ENCODE measurements at regions of chr19 and their contacts with region 1.

Region 1: GRCh38 chr19:12847159-12848139 is 9.1 kb downstream of the MAST1 start:
- DNase-seq: peak; percentile 72
- H3K4me3 ChIP-seq: no peak overlapping the region
- H3K27ac ChIP-seq: no peak overlapping the region
- H3K4me1 ChIP-seq: peaks cover 2% of the 10 kb centered on the region
- H3K27me3 ChIP-seq: no peaks in the 10 kb centered on the region
- CTCF ChIP-seq: peak; percentile 95 to 100
- POLR2A ChIP-seq: no peak

Region 2: GRCh38 chr19:11346092-11346940 is 1501.1 kb before region 1 on chr19 and contains the starts of genes CCDC159 and TMEM205:
- CTCF ChIA-PET with region 1: no interaction called
- POLR2A ChIA-PET with region 1: interaction called, 10 read pairs
- dilution Hi-C with region 1: no loop called
- intact Hi-C with region 1: no loop called
- DNase-seq: peak; percentile 99
- H3K4me3 ChIP-seq: peak within 1 kb of the TSS; percentile 36 to 93 (median 72)
- H3K27ac ChIP-seq: peak within 1 kb of the TSS; percentile 48
- H3K4me1 ChIP-seq: peaks cover 21% of the 10 kb centered on the region
- H3K27me3 ChIP-seq: no peaks in the 10 kb centered on the region
- CTCF ChIP-seq: no peak
- POLR2A ChIP-seq: peak; percentile 79
- total RNA-seq, gene CCDC159: 30.3 and 31.6 TPM in 2 replicates
- total RNA-seq, gene TMEM205: 57.3 and 58.9 TPM in 2 replicates

Region 3: DNA sequence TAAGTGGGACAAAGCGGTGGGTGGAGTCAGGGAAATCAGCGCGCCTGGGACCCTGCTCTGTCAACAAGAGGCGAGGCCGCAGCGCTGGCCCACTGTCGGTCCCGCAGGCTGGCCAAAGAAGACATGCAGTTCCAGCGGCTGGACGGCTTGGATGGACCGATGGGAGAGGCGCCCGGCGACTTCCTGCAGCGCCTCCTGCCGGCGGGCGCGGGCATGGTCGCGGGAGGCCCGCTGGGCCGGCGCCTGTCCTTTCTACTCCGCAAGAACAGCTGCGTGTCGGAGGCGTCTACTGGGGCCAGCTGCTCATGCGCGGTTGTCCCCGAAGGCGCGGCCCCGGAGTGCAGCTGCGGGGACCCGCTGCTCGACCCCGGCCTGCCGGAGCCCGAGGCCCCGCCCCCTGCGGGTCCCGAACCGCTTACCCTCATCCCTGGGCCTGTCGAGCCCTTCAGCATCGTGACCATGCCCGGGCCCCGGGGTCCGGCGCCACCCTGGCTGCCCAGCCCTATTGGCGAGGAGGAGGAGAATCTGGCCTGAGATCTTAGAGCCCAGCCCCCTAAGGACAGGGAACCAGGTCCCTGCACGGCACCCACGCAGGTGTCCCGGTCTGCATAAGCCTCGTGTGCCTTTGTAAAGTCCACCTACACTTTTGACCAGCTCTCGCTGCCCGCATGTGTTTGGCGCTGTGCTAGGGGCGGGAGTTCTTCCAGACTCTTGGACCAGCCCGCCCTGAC is 89.7 kb before region 1 on chr19:
- CTCF ChIA-PET with region 1: interaction called, 481 read pairs
- POLR2A ChIA-PET with region 1: no interaction called
- dilution Hi-C with region 1: no loop called
- intact Hi-C with region 1: loop called (anchors 1 kb)
- DNase-seq: peak; percentile 81
- H3K4me3 ChIP-seq: peak overlapping the region in 2 of 3 experiments; percentile 22 to 39
- H3K27ac ChIP-seq: no peak overlapping the region
- H3K4me1 ChIP-seq: no peaks in the 10 kb centered on the region
- H3K27me3 ChIP-seq: no peaks in the 10 kb centered on the region
- CTCF ChIP-seq: peak; percentile 98 to 99
- POLR2A ChIP-seq: no peak

Region 4: GRCh38 chr19:12777217-12778016 is 70.0 kb before region 1 on chr19:
- CTCF ChIA-PET with region 1: interaction called, 28 read pairs
- POLR2A ChIA-PET with region 1: no interaction called
- dilution Hi-C with region 1: no loop called
- intact Hi-C with region 1: no loop called
- DNase-seq: peak; percentile 78
- H3K4me3 ChIP-seq: peak overlapping the region; percentile 14 to 57 (median 51)
- H3K27ac ChIP-seq: peak overlapping the region; percentile 82
- H3K4me1 ChIP-seq: peaks cover 23% of the 10 kb centered on the region
- H3K27me3 ChIP-seq: no peaks in the 10 kb centered on the region
- CTCF ChIP-seq: peak; percentile 96 to 97
- POLR2A ChIP-seq: no peak

Region 5: DNA sequence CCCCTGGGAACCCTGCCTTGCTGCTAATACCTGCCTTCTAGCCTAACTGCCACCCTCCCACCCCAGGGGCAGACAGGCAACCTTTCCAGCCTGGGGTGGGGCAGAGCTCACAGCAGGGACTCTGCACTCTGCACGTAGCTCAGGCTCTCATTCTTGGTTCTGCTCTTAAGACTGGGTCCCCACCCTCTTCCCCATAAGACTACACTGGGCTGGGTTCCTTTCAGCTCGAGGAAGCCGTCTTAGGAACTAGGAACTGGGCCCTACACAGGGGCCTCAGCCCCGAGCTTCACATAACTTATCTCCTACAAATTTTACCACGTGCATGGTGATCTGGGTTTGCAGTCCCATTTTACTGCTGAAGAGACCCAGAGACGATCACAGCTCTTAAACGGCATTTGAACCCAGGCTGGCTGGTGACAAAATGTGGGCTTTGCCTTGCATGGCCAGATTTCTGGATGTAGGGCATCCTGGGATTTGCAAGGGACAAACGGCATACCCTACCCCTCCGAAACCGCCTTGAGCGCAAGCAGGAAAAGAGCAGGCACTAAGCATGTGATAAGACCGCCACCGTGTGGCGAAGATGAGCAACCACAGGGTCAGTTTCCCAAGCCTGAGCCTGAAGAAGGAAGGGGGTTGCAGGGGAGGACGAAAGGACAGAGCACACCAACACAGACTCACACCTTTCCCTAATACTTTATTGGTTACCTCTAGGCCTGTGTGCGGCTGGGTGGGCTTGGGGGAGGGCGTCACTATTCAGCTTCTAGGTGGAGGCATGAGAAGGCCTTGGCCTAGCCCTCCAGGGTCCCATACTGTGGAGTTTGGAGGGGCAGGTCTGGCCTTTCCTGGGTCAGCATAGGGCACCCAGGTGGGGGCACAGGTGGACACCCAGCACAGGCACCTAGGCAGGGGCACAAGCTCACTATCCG is 51.0 kb before region 1 on chr19:
- CTCF ChIA-PET with region 1: interaction called, 30 read pairs
- POLR2A ChIA-PET with region 1: no interaction called
- dilution Hi-C with region 1: no loop called
- intact Hi-C with region 1: loop called (anchors 1 kb)
- DNase-seq: peak; percentile 80
- H3K4me3 ChIP-seq: no peak overlapping the region
- H3K27ac ChIP-seq: no peak overlapping the region
- H3K4me1 ChIP-seq: peaks cover 18% of the 10 kb centered on the region
- H3K27me3 ChIP-seq: no peaks in the 10 kb centered on the region
- CTCF ChIP-seq: peak; percentile 89 to 90
- POLR2A ChIP-seq: no peak

Region 6: DNA sequence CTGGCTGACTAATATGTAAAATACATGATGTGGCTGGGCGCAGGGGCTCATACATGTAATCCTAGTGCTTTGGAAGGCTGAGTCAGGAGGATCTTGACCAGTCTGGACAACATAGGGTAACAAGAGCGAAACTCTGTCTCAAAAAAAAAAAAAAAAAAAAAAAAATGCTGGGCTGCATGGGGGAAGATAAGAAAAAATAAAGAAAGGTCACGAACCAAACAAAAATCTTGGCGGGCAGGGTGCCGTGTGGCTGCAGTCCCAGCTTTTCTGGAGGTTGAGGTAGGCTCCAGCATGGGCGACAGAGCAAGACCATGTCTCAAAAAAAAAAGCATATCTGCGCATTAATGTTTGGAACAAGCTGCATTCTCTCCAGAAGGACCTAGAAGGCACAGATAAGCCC is 32.4 kb before region 1 on chr19:
- CTCF ChIA-PET with region 1: interaction called, 30 read pairs
- POLR2A ChIA-PET with region 1: no interaction called
- dilution Hi-C with region 1: no loop called
- intact Hi-C with region 1: no loop called
- DNase-seq: no peak
- H3K4me3 ChIP-seq: no peak overlapping the region
- H3K27ac ChIP-seq: no peak overlapping the region
- H3K4me1 ChIP-seq: no peaks in the 10 kb centered on the region
- H3K27me3 ChIP-seq: no peaks in the 10 kb centered on the region
- CTCF ChIP-seq: no peak
- POLR2A ChIP-seq: no peak

Region 7: DNA sequence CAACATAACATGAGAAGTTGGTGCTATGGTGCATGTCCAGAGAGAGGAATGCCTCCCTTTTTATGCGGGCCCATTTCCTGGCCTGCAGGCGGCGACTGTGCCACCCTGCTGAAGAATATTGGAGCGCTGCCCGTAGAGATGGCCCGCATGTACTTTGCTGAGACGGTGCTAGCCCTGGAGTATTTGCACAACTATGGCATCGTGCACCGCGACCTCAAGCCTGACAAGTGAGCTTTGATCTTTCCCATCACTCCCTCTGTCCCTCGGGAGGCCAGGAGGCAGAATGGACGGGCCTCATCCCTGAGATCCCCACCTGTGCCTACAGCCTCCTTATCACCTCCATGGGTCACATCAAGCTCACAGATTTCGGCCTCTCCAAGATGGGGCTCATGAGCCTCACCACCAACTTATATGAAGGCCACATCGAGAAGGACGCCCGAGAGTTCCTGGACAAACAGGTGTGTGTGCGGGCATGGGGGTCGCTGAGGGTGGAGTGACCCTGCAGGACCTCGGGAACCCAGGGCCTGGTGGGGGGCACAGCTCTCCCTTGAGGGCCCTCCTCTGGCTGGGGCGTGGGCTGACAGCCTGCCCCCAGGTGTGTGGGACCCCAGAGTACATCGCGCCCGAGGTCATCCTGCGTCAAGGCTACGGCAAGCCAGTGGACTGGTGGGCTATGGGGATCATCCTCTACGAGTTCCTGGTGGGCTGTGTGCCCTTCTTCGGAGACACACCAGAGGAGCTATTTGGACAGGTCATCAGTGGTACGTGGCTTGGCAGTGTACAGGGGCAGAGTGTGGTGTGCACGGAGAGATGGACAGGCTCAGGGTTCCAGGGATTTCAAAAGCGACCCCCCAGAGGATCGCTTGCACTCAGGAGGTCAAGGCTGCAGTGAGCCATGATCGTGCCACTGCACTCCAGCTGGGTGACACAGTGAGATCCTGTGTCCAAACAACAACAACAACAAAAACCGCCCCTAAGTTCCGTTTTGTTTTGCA is 17.6 kb after region 1 on chr19:
- CTCF ChIA-PET with region 1: interaction called, 12 read pairs
- POLR2A ChIA-PET with region 1: no interaction called
- dilution Hi-C with region 1: no loop called
- intact Hi-C with region 1: no loop called
- DNase-seq: no peak
- H3K4me3 ChIP-seq: no peak overlapping the region
- H3K27ac ChIP-seq: no peak overlapping the region
- H3K4me1 ChIP-seq: peaks cover 2% of the 10 kb centered on the region
- H3K27me3 ChIP-seq: no peaks in the 10 kb centered on the region
- CTCF ChIP-seq: no peak
- POLR2A ChIP-seq: no peak

Region 8: GRCh38 chr19:13079542-13079986 is 232.1 kb after region 1 on chr19:
- CTCF ChIA-PET with region 1: no interaction called
- POLR2A ChIA-PET with region 1: no interaction called
- dilution Hi-C with region 1: no loop called
- intact Hi-C with region 1: no loop called
- DNase-seq: peak; percentile 28
- H3K4me3 ChIP-seq: no peak overlapping the region
- H3K27ac ChIP-seq: no peak overlapping the region
- H3K4me1 ChIP-seq: peaks cover 4% of the 10 kb centered on the region
- H3K27me3 ChIP-seq: no peaks in the 10 kb centered on the region
- CTCF ChIP-seq: no peak
- POLR2A ChIP-seq: no peak

Measured in endothelial cell of umbilical vein (primary cell).